Calu3 (cell line): ENCODE measurements at regions of chr6 and their contacts with region 1.

Region 1: GRCh38 chr6:20236909-20237600 is 24.8 kb upstream of the MBOAT1 start:
- DNase-seq: peak; percentile 46
- H3K4me3 Mint-ChIP-seq: peak overlapping the region; percentile 13
- H3K27ac Mint-ChIP-seq: peak overlapping the region; percentile 87
- H3K4me1 Mint-ChIP-seq: peaks cover 38% of the 10 kb centered on the region
- H3K27me3 Mint-ChIP-seq: no peaks in the 10 kb centered on the region
- CTCF ChIP-seq: no peak

Region 2: GRCh38 chr6:20266851-20267608 is 30.0 kb after region 1 on chr6:
- CTCF ChIA-PET with region 1: no interaction called
- intact Hi-C with region 1: loop called (anchors 2 kb)
- DNase-seq: peak; percentile 80
- H3K4me3 Mint-ChIP-seq: peak overlapping the region; percentile 0
- H3K27ac Mint-ChIP-seq: peak overlapping the region; percentile 68
- H3K4me1 Mint-ChIP-seq: peaks cover 35% of the 10 kb centered on the region
- H3K27me3 Mint-ChIP-seq: no peaks in the 10 kb centered on the region
- CTCF ChIP-seq: peak; percentile 29